WTC11 (cell line): ENCODE measurements at regions of chr13 and their contacts with region 1.

Region 1: GRCh38 chr13:24995226-24995804 is 100.6 kb upstream of the PABPC3 start:
- DNase-seq: peak; percentile 65
- ATAC-seq: peak; percentile 87
- H3K4me3 Mint-ChIP-seq: no peak overlapping the region
- H3K27ac Mint-ChIP-seq: no peak overlapping the region
- H3K4me1 Mint-ChIP-seq: peaks cover 10% of the 10 kb centered on the region
- H3K27me3 Mint-ChIP-seq: no peaks in the 10 kb centered on the region
- CTCF ChIP-seq: peak; percentile 55; the same call in 1 of the 2 replicates

Region 2: DNA sequence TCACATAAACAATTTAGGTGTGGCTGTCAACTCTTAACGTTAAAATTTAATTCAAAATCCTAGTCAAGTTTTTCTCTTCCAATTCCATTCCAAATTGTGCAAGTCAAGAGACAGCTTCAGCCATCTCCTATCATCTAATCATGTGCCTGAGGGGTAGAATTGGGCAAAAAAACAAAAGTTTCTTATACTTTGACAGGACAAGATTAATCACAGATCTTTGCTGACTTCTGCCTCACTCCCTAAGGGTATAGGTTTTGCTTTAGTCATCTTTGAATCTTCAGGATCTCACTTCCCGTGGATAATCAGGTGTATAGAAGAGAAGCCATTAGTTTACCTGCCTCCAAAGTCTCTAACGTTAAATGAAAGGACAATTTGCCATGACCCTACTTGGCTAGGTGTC is 206.8 kb before region 1 on chr13:
- CTCF ChIA-PET with region 1: no interaction called
- POLR2A ChIA-PET with region 1: no interaction called
- DNase-seq: no peak
- ATAC-seq: no peak
- H3K4me3 Mint-ChIP-seq: no peak overlapping the region
- H3K27ac Mint-ChIP-seq: no peak overlapping the region
- H3K4me1 Mint-ChIP-seq: no peaks in the 10 kb centered on the region
- H3K27me3 Mint-ChIP-seq: no peaks in the 10 kb centered on the region
- CTCF ChIP-seq: no peak

Region 3: DNA sequence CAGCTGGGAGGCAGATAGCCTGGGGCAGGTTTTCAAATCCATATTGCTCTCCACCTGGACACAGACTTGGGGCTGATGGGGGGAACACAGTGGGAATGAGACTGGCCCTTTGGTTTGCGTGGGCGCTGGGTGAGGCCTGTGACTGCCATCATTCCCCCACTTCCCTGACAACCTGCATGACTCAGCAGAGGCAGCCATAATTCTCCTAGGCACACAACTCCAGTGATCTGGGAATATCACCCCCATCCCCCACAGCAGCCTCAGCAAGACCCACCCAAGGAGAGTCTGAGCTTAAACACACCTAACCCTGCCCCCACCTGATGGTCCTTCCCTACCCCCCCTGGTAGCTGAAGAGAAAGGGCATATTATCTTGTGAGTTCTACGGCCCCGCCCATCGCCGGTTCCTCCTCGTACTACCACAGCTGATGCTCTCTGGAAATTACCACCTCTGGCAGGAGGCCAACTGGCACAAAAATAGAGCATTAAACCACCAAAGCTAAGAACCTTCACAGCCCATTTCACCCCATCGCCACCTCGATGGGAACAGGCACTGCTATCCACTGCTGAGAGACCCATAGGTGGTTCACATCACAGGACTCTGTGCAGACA is 160.3 kb before region 1 on chr13:
- CTCF ChIA-PET with region 1: no interaction called
- POLR2A ChIA-PET with region 1: no interaction called
- DNase-seq: no peak
- ATAC-seq: no peak
- H3K4me3 Mint-ChIP-seq: no peak overlapping the region
- H3K27ac Mint-ChIP-seq: no peak overlapping the region
- H3K4me1 Mint-ChIP-seq: peaks cover 8% of the 10 kb centered on the region
- H3K27me3 Mint-ChIP-seq: peaks cover 11% of the 10 kb centered on the region
- CTCF ChIP-seq: no peak

Region 4: GRCh38 chr13:24985109-24985508 is 10.2 kb before region 1 on chr13:
- CTCF ChIA-PET with region 1: interaction called, 17 read pairs
- POLR2A ChIA-PET with region 1: no interaction called
- DNase-seq: peak; percentile 36
- ATAC-seq: peak; percentile 82
- H3K4me3 Mint-ChIP-seq: no peak overlapping the region
- H3K27ac Mint-ChIP-seq: no peak overlapping the region
- H3K4me1 Mint-ChIP-seq: peaks cover 35% of the 10 kb centered on the region
- H3K27me3 Mint-ChIP-seq: peaks cover 11% of the 10 kb centered on the region
- CTCF ChIP-seq: no peak

Region 5: DNA sequence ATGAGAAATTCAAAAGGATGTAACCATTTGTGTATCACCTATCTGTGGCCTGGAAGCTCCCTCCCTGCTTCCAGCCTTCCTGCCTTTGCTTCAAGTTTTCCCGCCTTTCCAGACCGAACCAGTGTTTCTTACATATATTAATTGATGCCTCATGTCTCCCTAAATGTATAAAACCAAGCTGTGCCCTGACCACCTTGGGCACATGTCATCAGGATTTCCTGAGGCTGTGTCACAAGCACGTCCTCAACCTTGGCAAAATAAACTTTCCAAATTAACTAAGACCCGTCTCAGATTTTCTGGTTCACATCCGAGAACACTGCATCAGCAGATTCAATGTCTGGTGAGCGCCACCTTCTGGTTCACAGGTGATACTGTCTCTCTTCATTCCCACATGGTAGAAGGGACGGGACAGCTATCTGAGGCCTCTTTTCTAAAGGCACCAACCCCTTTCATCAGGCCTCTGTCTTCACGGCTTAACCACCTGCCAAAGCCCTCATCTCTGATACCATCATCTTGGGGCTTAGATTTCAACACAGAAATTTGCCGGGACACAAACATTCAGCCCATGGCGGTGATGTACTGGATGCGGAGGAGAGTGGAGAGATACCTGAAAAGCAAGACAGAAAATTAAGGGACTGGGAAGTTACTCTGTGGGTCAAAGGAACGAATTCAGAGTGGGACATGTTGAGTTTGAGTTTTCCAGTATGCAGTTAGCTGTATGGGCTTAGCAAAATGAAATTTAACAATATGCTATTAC is 41.9 kb after region 1 on chr13:
- CTCF ChIA-PET with region 1: interaction called, 17 read pairs
- POLR2A ChIA-PET with region 1: no interaction called
- DNase-seq: peak; percentile 55
- ATAC-seq: peak; percentile 91
- H3K4me3 Mint-ChIP-seq: no peak overlapping the region
- H3K27ac Mint-ChIP-seq: no peak overlapping the region
- H3K4me1 Mint-ChIP-seq: peaks cover 2% of the 10 kb centered on the region
- H3K27me3 Mint-ChIP-seq: no peaks in the 10 kb centered on the region
- CTCF ChIP-seq: peak; percentile 69

Region 6: GRCh38 chr13:25069911-25070310 is 74.6 kb after region 1 on chr13:
- CTCF ChIA-PET with region 1: interaction called, 11 read pairs
- POLR2A ChIA-PET with region 1: no interaction called
- DNase-seq: peak; percentile 25
- ATAC-seq: no peak
- H3K4me3 Mint-ChIP-seq: no peak overlapping the region
- H3K27ac Mint-ChIP-seq: peak overlapping the region; percentile 38; the same call in 1 of the 2 replicates
- H3K4me1 Mint-ChIP-seq: peaks cover 57% of the 10 kb centered on the region
- H3K27me3 Mint-ChIP-seq: no peaks in the 10 kb centered on the region; the same call in 1 of the 2 replicates
- CTCF ChIP-seq: no peak

Region 7: GRCh38 chr13:25095862-25096453 is 100.6 kb after region 1 on chr13 and contains the start of gene PABPC3:
- CTCF ChIA-PET with region 1: no interaction called
- POLR2A ChIA-PET with region 1: no interaction called
- DNase-seq: peak; percentile 23
- ATAC-seq: no peak
- H3K4me3 Mint-ChIP-seq: no peak within 1 kb of the TSS; the same call in 1 of the 2 replicates
- H3K27ac Mint-ChIP-seq: no peak within 1 kb of the TSS
- H3K4me1 Mint-ChIP-seq: no peaks in the 10 kb centered on the region
- H3K27me3 Mint-ChIP-seq: no peaks in the 10 kb centered on the region; the same call in 1 of the 2 replicates
- CTCF ChIP-seq: no peak
- total RNA-seq, gene PABPC3: 0.35 to 0.39 TPM (median 0.39 TPM) in 3 replicates

Region 8: GRCh38 chr13:25114220-25114619 is 118.9 kb after region 1 on chr13:
- CTCF ChIA-PET with region 1: interaction called, 15 read pairs
- POLR2A ChIA-PET with region 1: no interaction called
- DNase-seq: peak; percentile 88
- ATAC-seq: peak; percentile 87
- H3K4me3 Mint-ChIP-seq: no peak overlapping the region
- H3K27ac Mint-ChIP-seq: no peak overlapping the region
- H3K4me1 Mint-ChIP-seq: peaks cover 50% of the 10 kb centered on the region
- H3K27me3 Mint-ChIP-seq: peaks cover 14% of the 10 kb centered on the region
- CTCF ChIP-seq: peak; percentile 73

Region 9: DNA sequence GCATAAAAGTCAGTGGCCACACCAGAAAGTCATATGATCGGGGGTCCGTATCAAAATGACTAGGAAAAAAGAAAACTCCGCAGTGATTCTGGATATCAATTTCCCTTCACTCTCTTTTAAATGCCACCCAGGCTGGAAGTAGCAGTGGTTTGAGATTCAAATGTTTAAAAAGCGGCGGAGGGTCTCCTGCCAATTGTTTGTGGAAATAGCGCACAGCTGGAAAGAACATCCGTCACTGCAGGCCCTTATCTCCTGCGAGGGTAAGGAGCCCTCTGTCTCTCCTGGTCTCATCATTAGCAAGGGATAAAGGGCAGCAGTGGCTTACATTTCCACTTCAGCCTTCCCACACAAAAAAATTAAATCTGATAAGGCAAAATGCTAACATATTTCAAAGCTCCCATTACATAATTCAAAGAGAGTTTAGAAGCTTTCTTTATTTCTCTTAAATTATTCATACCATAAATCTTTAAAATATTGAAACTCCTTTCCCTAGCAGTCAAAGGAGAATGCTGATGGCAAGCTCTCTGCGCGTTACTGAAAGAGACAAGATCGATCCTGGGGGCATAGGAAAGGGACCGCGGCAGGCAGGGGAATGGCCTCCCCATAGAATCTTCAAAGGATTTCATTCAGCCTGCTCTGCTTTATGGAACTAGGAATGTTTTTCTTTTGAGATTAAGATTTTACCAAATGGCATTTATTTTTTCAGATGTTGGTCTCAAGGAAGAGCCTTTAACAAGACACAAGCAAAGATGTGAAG is 141.7 kb after region 1 on chr13:
- CTCF ChIA-PET with region 1: no interaction called
- POLR2A ChIA-PET with region 1: no interaction called
- DNase-seq: no peak
- ATAC-seq: peak; percentile 71
- H3K4me3 Mint-ChIP-seq: peak overlapping the region; percentile 57
- H3K27ac Mint-ChIP-seq: peak overlapping the region; percentile 95
- H3K4me1 Mint-ChIP-seq: peaks cover 51% of the 10 kb centered on the region
- H3K27me3 Mint-ChIP-seq: peaks cover 25% of the 10 kb centered on the region
- CTCF ChIP-seq: no peak